ENCODE measurements at regions of chr17 and their contacts with region 1.

Region 1: DNA sequence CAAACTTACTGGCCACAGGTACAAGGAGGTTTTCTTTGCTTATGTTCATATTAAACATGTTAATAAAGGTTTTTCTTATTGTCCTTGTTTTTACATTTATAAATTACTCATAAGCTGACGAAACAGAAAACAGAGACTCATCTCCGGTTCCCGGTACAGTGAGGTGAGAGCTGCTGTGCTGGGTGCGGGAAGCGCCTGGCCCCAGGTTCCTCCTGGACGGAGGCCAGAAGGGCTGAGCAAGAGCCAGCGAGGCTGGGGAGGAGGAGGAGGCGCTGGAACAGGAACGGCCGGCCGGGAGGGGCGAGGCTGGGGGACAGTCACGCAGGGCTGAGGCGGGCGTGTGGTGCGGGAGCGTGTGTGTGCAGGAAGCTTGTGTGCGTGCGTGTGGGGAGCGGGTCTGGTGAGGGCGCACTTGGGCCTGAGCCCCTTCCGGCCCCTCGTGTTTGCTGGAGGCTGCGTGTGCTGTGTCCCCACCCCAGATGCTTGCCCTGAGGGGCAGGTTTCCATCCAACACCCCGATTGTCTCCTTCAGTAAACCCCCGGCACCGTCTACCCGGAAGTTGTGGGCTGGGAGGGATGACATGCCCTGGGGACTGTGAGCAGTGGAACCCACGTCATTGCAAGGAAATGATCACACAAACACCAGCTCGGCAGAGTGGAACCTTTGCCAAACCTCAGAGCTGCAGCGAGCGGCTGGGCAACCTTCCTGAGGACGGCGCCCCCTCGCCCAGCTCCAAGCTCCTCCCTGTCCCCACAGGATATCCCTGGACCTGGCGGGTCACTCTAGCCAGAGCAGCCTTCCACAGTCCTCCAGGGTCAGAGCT is 19.5 kb downstream of the CD7 start:
- DNase-seq: peak; percentile 98
- H3K4me3 Mint-ChIP-seq: peak overlapping the region; percentile 92
- H3K27ac Mint-ChIP-seq: peak overlapping the region; percentile 98
- H3K4me1 Mint-ChIP-seq: peaks cover 56% of the 10 kb centered on the region
- H3K27me3 Mint-ChIP-seq: no peaks in the 10 kb centered on the region
- CTCF ChIP-seq: no peak

Region 2: DNA sequence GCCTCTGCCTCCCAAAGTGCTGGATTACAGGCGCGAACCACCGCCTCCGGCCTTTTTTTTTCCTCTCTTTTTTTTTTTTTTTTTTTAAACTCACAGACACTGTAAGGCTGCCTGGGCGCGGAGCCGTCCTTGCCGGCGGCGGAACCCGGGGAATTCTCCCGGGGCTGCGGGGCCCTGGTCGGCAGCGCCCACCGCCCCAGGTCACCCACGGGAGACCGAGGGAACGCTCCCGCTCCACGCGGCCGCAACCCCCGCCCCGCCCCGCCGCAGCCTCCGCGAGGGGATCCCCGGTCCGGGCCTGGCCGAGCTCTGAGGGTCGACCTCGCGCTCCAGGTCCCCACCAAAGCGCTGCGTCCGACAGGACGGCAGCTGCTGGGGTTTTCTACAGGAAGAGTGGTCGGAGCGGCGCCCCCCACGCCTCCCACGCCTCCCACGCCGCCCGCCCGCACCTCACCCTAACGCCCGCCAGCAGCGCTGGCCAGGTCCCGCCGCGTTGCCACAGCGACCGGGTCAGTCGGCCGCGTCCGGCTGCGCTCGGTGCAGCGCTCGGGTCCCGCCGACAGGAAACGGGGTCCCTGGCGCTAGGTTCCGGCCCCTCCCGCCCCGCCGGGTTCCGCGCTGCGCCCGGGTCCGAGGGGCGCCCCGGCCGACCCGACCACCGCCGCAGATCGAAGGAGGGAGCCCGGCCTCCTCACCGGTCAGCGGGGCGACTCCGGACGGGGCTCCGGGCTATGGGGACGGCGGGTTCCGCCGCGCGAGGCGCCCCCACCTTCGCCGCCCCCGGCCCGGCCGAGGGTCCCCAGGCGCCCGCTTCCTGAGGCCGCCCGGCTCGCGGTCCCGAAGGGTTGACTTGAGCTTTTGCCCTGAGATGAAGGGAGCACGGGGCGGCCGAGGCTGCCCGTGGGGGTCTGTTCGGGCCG is 85.3 kb before region 1 on chr17 and contains the start of gene CCDC57:
- CTCF ChIA-PET with region 1: no interaction called
- POLR2A ChIA-PET with region 1: interaction called, 14 read pairs
- intact Hi-C with region 1: no loop called
- DNase-seq: peak; percentile 67
- H3K4me3 Mint-ChIP-seq: peak within 1 kb of the TSS; percentile 72
- H3K27ac Mint-ChIP-seq: peak within 1 kb of the TSS; percentile 57
- H3K4me1 Mint-ChIP-seq: peaks cover 26% of the 10 kb centered on the region
- H3K27me3 Mint-ChIP-seq: no peaks in the 10 kb centered on the region
- CTCF ChIP-seq: no peak
- total RNA-seq, gene CCDC57: 86.8 and 87.3 TPM in 2 replicates

Region 3: DNA sequence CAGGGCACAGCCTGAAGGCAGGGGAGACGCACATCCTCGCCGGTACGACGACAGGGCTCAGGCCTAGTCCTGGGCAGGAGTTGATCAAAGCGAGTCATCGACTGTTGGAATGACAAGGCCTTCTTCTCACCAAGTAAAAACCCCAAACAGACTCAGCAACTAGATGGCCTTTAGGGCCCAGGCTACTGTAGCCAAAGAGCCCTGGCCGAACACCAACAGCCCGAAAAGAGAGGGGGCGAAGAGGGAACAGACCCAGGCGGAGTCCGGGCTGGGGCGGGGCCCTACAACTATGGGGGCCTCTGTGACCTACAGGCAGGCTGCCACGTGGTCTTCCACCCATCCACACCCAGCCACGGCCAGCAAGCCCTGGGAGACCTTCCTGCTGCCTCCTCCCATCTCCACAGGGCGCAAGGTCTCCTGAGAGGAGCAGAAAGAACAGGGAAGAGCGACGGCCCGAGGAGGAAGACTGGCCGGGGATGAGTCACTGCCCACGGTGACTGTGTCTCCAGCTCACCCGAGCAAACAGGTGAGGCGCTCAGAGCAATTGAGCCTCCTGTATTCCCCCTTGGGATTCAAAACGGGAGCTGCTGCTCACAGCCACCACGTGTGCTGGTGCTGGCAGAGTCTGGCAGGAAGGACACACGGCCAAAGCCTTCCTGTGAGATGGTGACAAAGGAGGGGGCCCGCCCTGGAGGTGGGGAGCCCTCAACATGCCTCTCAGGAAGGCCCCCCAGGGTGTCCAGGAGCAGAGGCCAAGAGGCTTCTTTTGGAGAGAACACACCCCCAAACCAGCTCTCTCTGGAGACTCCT is 51.4 kb before region 1 on chr17:
- CTCF ChIA-PET with region 1: no interaction called
- POLR2A ChIA-PET with region 1: interaction called, 49 read pairs
- intact Hi-C with region 1: loop called (anchors 1 kb)
- DNase-seq: peak; percentile 93
- H3K4me3 Mint-ChIP-seq: peak overlapping the region; percentile 14
- H3K27ac Mint-ChIP-seq: peak overlapping the region; percentile 70
- H3K4me1 Mint-ChIP-seq: peaks cover 55% of the 10 kb centered on the region
- H3K27me3 Mint-ChIP-seq: no peaks in the 10 kb centered on the region
- CTCF ChIP-seq: no peak

Region 4: DNA sequence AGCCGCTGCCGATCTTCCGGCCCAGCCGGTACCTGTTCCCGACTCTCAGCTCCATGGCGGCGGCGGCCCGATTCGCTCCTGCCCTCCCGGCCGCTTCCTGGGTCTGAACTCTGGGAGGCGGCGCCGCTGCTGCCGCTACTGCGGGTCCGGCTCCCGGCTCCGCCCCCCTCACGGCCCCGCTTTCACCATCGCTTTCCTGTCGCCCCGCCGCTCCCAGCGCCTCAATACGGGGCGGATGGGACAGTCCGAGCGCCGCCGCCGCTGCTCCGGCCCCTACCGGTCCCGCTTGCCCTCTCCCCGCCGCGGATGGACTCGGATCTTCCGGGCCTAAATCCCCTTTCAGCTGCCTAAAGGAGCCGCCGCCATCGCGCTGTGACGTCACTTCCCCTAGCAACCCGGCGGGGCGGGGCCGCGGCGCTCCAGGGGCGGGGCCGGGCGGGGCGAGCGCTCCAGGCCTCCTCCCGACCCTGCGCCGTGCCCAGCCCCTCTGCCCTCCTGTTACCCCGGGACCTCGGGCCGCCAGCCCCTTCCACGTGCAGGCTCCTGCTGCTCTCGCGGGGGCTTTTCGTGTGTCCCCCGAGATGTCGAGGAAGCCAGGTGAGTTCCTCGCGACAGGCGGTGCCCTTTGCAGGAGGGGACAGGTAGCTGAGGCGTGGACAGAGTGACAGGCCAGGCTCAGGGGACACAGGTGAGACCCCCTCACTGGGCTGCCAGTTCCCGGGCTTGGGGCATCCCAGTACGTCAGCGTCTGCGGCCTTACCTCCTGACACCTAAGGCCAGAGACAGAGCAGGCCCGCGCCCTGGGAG is 24.4 kb before region 1 on chr17 and contains the start of gene CSNK1D:
- CTCF ChIA-PET with region 1: interaction called, 6 read pairs
- POLR2A ChIA-PET with region 1: interaction called, 38 read pairs
- intact Hi-C with region 1: no loop called
- DNase-seq: peak; percentile 88
- H3K4me3 Mint-ChIP-seq: peak within 1 kb of the TSS; percentile 77
- H3K27ac Mint-ChIP-seq: peak within 1 kb of the TSS; percentile 100
- H3K4me1 Mint-ChIP-seq: peaks cover 16% of the 10 kb centered on the region
- H3K27me3 Mint-ChIP-seq: no peaks in the 10 kb centered on the region
- CTCF ChIP-seq: no peak
- total RNA-seq, gene CSNK1D: 191 and 193 TPM in 2 replicates

Region 5: DNA sequence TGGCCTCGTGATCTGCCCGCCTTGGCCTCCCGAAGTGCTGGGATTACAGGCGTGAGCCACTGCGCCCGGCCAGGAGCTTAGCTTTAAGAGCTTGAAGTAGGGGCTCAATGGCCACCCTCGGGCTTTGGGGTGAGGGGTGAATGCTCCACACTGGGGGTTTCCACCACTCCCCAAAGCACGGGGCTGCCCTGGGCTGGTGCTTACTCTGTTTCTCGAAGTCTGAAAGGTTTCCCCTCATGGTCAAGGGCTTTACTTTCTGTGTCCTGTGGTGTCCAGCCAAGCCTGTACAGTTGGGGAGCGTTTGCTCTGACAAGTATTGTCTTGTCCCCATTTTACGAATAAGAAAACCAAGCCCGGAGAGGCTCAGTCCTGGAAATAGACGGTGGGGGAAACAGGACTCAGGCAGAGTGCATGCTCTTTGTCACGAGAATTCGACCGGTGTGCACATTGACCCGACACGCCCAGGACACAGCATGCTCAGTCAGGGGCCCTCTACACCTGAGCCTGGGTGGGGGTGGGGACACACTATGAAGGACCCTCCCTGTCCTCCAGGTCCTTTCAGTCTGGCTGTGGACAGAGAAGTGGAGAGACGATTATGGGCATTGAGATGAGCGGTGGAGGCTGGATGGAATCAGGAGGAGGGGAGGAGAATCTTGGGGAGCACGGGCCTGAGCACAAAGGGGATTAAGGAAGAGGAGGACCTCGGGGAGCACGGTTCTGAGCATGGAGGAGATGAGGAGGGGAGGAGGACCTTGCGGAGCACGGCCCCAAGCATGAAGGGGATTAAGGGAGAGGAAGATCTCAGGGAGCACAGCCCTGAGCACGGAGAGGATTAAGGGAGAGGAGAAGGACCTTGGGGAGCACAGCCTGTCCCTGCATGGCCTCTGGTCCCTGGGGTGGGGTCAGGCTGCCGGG is 12.0 kb after region 1 on chr17:
- CTCF ChIA-PET with region 1: interaction called, 14 read pairs
- POLR2A ChIA-PET with region 1: interaction called, 17 read pairs
- intact Hi-C with region 1: no loop called
- DNase-seq: no peak
- H3K4me3 Mint-ChIP-seq: no peak overlapping the region
- H3K27ac Mint-ChIP-seq: no peak overlapping the region
- H3K4me1 Mint-ChIP-seq: peaks cover 13% of the 10 kb centered on the region
- H3K27me3 Mint-ChIP-seq: peaks cover 11% of the 10 kb centered on the region
- CTCF ChIP-seq: no peak

Region 6: GRCh38 chr17:82338858-82339633 is 41.1 kb after region 1 on chr17:
- CTCF ChIA-PET with region 1: interaction called, 4 read pairs
- POLR2A ChIA-PET with region 1: interaction called, 88 read pairs
- intact Hi-C with region 1: no loop called
- DNase-seq: peak; percentile 87
- H3K4me3 Mint-ChIP-seq: peak overlapping the region; percentile 63
- H3K27ac Mint-ChIP-seq: peak overlapping the region; percentile 93
- H3K4me1 Mint-ChIP-seq: peaks cover 23% of the 10 kb centered on the region
- H3K27me3 Mint-ChIP-seq: no peaks in the 10 kb centered on the region
- CTCF ChIP-seq: no peak